IMR-90 (cell line): ENCODE measurements at regions of chr2 and their contacts with region 1.

Region 1: GRCh38 chr2:43877782-43878464 is 39.2 kb downstream of the ABCG8 start:
- DNase-seq: peak; percentile 56
- ATAC-seq: peak; percentile 88
- H3K4me3 ChIP-seq: no peak overlapping the region
- H3K27ac ChIP-seq: no peak overlapping the region
- H3K4me1 ChIP-seq: peaks cover 4% of the 10 kb centered on the region
- H3K27me3 ChIP-seq: peaks cover 24% of the 10 kb centered on the region
- CTCF ChIP-seq: peak; percentile 93
- POLR2A ChIP-seq: no peak
- RAD21 ChIP-seq: peak; percentile 85

Region 2: DNA sequence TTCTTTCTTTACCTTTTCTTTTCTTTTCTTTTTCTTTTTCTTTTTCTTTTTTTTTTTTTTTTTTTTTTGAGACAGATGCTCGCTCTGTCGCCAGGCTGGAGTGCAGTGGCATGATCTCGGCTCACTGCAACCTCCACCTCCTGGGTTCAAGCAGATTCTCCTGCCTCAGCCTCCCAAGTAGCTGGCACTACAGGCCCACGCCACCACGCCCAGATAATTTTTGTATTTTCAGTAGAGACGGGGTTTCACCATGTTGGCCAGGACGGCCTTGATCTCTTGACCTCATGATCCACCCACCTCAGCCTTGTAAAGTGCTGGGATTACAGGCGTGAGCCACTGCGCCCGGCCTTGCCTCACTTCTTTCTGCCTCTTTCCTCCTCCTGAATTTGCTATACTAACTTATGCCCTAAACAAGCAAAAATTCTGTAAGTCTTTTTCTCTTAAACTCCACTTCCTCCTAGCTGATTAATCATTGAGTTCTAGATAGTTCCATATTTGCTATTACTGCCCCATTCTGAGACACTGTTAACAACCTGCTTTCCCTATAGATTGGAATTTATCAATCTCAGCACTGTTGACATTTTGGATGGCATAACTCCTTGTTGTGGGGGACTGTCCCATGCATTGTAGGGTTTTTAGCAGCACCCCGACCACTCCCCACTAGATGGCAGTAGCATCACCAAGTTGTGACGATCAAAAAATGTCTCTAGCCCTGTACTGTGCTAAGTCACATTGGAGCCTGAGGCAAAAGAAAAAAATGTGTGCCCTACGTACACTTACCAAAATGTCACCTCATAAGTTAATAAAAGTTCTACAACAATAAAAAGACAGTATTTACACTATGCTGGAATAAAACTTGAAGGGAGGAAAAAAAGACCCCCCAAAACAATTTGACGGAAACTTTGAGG is 265.7 kb before region 1 on chr2:
- CTCF ChIA-PET with region 1: no interaction called
- POLR2A ChIA-PET with region 1: no interaction called
- dilution Hi-C with region 1: no loop called
- in situ Hi-C with region 1: loop called (anchors 5 kb)
- intact Hi-C with region 1: loop called (anchors 2 kb)
- DNase-seq: peak; percentile 76
- ATAC-seq: peak; percentile 96
- H3K4me3 ChIP-seq: no peak overlapping the region
- H3K27ac ChIP-seq: no peak overlapping the region
- H3K4me1 ChIP-seq: peaks cover 2% of the 10 kb centered on the region; the same call in 1 of the 2 replicates
- H3K27me3 ChIP-seq: peaks cover 3% of the 10 kb centered on the region; the same call in 1 of the 2 replicates
- CTCF ChIP-seq: peak; percentile 84
- POLR2A ChIP-seq: no peak
- RAD21 ChIP-seq: peak; percentile 78

Region 3: GRCh38 chr2:43764086-43764705 is 113.7 kb before region 1 on chr2:
- CTCF ChIA-PET with region 1: no interaction called
- POLR2A ChIA-PET with region 1: no interaction called
- dilution Hi-C with region 1: no loop called
- in situ Hi-C with region 1: no loop called
- intact Hi-C with region 1: no loop called
- DNase-seq: peak; percentile 16
- ATAC-seq: peak; percentile 69
- H3K4me3 ChIP-seq: no peak overlapping the region
- H3K27ac ChIP-seq: no peak overlapping the region; the same call in 1 of the 2 replicates
- H3K4me1 ChIP-seq: peaks cover 2% of the 10 kb centered on the region
- H3K27me3 ChIP-seq: no peaks in the 10 kb centered on the region
- CTCF ChIP-seq: no peak
- POLR2A ChIP-seq: no peak
- RAD21 ChIP-seq: no peak

Region 4: GRCh38 chr2:43943809-43944452 is 66.0 kb after region 1 on chr2:
- CTCF ChIA-PET with region 1: interaction called, 3 read pairs
- POLR2A ChIA-PET with region 1: no interaction called
- dilution Hi-C with region 1: no loop called
- in situ Hi-C with region 1: no loop called
- intact Hi-C with region 1: loop called (anchors 5 kb)
- DNase-seq: peak; percentile 8
- ATAC-seq: no peak
- H3K4me3 ChIP-seq: no peak overlapping the region
- H3K27ac ChIP-seq: no peak overlapping the region
- H3K4me1 ChIP-seq: 0 out of 2 replicates have a peak, but pooled peaks cover 2% of the 10 kb centered on the region
- H3K27me3 ChIP-seq: no peaks in the 10 kb centered on the region
- CTCF ChIP-seq: no peak
- POLR2A ChIP-seq: no peak
- RAD21 ChIP-seq: no peak

Region 5: GRCh38 chr2:43950383-43951008 is 72.6 kb after region 1 on chr2:
- CTCF ChIA-PET with region 1: no interaction called
- POLR2A ChIA-PET with region 1: no interaction called
- dilution Hi-C with region 1: no loop called
- in situ Hi-C with region 1: no loop called
- intact Hi-C with region 1: loop called (anchors 2 kb)
- DNase-seq: peak; percentile 51
- ATAC-seq: peak; percentile 64; the same call in 1 of the 2 replicates
- H3K4me3 ChIP-seq: no peak overlapping the region
- H3K27ac ChIP-seq: no peak overlapping the region
- H3K4me1 ChIP-seq: no peaks in the 10 kb centered on the region
- H3K27me3 ChIP-seq: no peaks in the 10 kb centered on the region
- CTCF ChIP-seq: peak; percentile 45
- POLR2A ChIP-seq: no peak
- RAD21 ChIP-seq: no peak

Region 6: DNA sequence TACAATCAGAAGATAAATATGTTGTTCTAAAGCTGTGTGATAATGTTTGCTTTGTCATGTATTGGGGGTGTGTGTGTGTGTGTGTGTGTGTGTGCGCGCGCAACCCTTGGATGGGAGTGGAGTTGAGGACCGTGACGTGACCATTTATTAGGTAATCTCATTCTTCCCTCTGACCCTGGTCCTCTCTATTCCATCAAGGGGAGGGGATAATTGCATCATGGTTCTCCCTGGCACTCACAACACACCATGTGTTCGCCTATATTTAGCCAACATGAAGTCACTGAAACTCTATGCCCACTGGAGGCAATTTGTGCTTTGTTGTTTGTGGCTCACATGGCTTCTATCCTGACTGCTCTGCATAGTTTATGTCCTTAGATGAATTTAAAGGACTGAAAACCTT is 197.6 kb after region 1 on chr2:
- CTCF ChIA-PET with region 1: no interaction called
- POLR2A ChIA-PET with region 1: no interaction called
- dilution Hi-C with region 1: no loop called
- in situ Hi-C with region 1: no loop called
- intact Hi-C with region 1: no loop called
- DNase-seq: peak; percentile 52
- ATAC-seq: peak; percentile 61
- H3K4me3 ChIP-seq: no peak overlapping the region
- H3K27ac ChIP-seq: no peak overlapping the region
- H3K4me1 ChIP-seq: no peaks in the 10 kb centered on the region
- H3K27me3 ChIP-seq: peaks cover 2% of the 10 kb centered on the region; the same call in 1 of the 2 replicates
- CTCF ChIP-seq: no peak
- POLR2A ChIP-seq: no peak
- RAD21 ChIP-seq: no peak